AG04450 (cell line): ENCODE measurements at regions of chr14 and their contacts with region 1.

Region 1: GRCh38 chr14:71855399-71856036 is 76.7 kb upstream of the RGS6 start:
- DNase-seq: peak; percentile 49
- H3K4me3 ChIP-seq: no peak overlapping the region
- H3K27ac ChIP-seq: no peak overlapping the region
- H3K27me3 ChIP-seq: no peaks in the 10 kb centered on the region
- CTCF ChIP-seq: peak; percentile 86

Region 2: GRCh38 chr14:71138448-71139293 is 716.8 kb before region 1 on chr14:
- CTCF ChIA-PET with region 1: interaction called, 16 read pairs
- POLR2A ChIA-PET with region 1: no interaction called
- DNase-seq: peak; percentile 13
- H3K4me3 ChIP-seq: no peak overlapping the region; the same call in 1 of the 2 replicates
- H3K27ac ChIP-seq: no peak overlapping the region
- H3K27me3 ChIP-seq: no peaks in the 10 kb centered on the region
- CTCF ChIP-seq: peak; percentile 96

Region 3: DNA sequence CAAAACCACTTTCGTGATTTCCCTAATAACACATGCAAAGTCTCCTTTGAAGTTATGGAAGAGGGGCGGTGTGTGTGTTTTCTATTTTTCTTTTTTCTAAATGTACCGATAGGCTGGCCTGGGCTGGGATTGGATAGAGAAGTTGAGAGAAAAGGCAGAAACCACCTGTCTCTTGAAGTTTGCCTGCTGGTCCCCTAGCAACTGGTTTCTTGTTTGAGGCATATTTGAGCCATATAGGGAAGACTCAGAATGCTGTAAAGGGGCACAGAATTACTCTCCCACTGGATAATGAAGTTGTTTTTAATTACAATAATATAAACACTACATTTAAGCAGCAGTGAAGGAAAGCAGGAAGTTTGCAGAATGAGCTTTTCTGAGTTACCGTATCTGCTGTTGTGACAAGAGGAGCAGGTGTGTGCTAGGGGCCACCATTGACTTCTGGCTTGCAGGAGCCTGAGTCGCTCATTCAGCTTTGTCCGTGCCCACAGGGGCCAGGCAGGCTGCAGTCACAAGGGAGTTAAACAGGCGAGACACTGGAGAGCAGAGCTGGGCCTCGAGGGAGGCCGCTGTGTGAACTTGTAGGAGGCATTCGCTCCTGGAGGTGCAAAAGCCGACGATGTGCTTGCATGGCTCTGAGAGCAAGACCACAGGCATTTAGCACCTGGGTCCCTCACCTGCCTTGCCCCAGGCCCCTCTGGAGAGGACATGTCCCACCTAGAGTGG is 97.1 kb before region 1 on chr14:
- CTCF ChIA-PET with region 1: interaction called, 108 read pairs
- POLR2A ChIA-PET with region 1: no interaction called
- DNase-seq: no peak
- H3K4me3 ChIP-seq: no peak overlapping the region
- H3K27ac ChIP-seq: no peak overlapping the region
- H3K27me3 ChIP-seq: no peaks in the 10 kb centered on the region
- CTCF ChIP-seq: no peak

Region 4: GRCh38 chr14:71803524-71804260 is 51.8 kb before region 1 on chr14:
- CTCF ChIA-PET with region 1: interaction called, 12 read pairs
- POLR2A ChIA-PET with region 1: no interaction called
- DNase-seq: peak; percentile 30
- H3K4me3 ChIP-seq: no peak overlapping the region
- H3K27ac ChIP-seq: peak overlapping the region; percentile 75
- H3K27me3 ChIP-seq: peaks cover 2% of the 10 kb centered on the region
- CTCF ChIP-seq: no peak

Region 5: DNA sequence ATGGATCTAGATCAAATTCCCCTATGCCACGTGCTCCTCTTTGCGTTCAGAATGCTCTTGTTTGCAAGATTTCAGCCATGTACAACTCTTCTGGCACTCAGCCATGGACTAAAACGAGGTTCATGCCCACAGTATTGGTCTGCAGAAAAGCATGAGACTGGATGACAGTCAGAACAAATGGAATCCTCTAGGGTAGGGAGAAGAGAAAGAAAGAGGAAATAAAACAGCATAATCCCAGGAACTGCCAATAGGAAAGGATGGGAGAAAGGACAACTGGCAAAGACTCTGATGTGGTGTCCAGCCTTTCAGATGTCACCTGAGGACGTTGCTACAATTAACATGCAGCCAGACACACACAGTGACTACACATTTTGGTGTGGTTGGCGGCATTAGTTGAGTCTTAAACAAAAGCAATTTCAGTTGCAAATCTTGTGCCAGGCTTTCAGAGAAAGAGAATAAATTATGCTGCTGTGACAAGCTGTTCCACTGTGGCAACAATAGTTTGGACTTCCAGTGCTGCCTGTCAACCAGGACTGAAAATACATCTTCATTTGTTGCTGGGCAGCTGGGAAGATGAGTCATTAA is 414.7 kb after region 1 on chr14:
- CTCF ChIA-PET with region 1: no interaction called
- POLR2A ChIA-PET with region 1: no interaction called
- DNase-seq: no peak
- H3K4me3 ChIP-seq: no peak overlapping the region
- H3K27ac ChIP-seq: no peak overlapping the region
- H3K27me3 ChIP-seq: no peaks in the 10 kb centered on the region
- CTCF ChIP-seq: no peak

Region 6: DNA sequence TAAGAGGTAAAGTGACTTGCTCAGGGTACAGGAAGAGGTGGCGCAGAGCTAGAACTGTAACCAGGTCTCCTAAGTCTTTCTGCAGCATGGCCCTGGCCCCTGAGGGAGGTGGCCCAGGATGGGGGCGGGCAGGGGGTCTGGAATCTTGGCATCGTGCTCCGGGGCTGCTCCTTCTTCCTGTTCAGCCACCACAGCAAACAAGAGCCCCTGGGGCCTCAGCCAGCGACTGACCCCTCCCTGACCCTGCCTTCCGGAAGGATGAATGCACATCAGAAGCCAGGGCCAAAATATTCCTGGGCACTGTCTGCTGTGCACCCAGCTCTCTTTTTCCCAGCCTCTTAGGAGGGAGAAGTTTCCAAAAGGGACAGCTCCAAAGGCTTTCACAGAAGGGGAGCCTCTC is 795.6 kb after region 1 on chr14:
- CTCF ChIA-PET with region 1: no interaction called
- POLR2A ChIA-PET with region 1: no interaction called
- DNase-seq: no peak
- H3K4me3 ChIP-seq: no peak overlapping the region
- H3K27ac ChIP-seq: peak overlapping the region; percentile 39
- H3K27me3 ChIP-seq: no peaks in the 10 kb centered on the region
- CTCF ChIP-seq: no peak